A549 (cell line): ENCODE measurements at regions of chr2 and their contacts with region 1.

Region 1: GRCh38 chr2:219160186-219161017 is at the start of gene NHEJ1:
- DNase-seq: peak; percentile 94 to 95
- ATAC-seq: peak; percentile 94 to 96
- H3K4me3 ChIP-seq: peak within 1 kb of the TSS; percentile 54
- H3K27ac ChIP-seq: peak within 1 kb of the TSS; percentile 91 to 95
- H3K4me1 ChIP-seq: peaks cover 9% of the 10 kb centered on the region
- CTCF ChIP-seq: peak; percentile 95
- EP300 ChIP-seq: no peak
- POLR2A ChIP-seq: peak; percentile 80
- RAD21 ChIP-seq: peak; percentile 85 to 91
- polyA plus RNA-seq, gene NHEJ1: 31.8 and 34.7 TPM in 2 replicates

Region 2: DNA sequence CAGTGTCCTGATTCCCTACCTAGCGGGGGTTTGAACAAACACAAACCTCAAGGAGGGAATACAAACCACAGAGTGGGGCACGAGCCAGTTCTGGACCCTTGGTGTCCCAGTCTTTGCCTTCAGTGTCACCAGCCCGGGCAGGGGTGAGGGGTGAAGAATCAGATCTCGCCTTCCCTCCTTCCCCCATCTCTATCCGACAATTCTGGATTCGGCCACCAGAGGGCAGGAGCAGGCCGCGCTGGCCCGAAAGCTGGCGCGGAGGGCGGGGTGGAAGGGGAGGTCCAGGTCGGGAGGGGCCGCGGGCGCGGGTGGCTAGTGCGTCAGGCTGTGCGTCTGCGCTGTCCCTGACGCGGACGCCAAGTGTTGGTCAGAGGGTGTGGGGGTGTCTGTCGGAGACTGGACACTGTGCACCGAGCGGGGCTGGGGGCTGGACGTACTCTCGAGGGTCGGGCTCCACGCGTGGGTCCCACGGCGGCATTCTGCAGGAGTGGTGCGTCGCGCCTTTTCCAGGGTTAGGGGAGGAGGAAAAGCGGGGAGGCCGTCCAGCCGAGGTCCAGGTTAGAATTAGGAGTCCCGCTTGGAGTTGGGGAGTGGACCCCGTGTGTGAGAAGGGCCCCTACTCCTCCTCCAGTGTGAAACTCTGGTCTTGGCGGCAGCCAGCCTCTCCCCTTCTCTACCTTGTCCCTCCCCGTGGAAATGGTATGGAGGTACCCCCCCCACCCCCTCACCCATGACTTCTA is 164.3 kb before region 1 on chr2:
- CTCF ChIA-PET with region 1: interaction called, 17 read pairs
- POLR2A ChIA-PET with region 1: no interaction called
- DNase-seq: peak; percentile 87
- ATAC-seq: peak; percentile 78 to 93
- H3K4me3 ChIP-seq: peak overlapping the region; percentile 49
- H3K27ac ChIP-seq: peak overlapping the region; percentile 79 to 84
- H3K4me1 ChIP-seq: peaks cover 10% of the 10 kb centered on the region
- CTCF ChIP-seq: peak; percentile 87
- EP300 ChIP-seq: no peak
- POLR2A ChIP-seq: peak; percentile 84
- RAD21 ChIP-seq: peak; percentile 74 to 80

Region 3: DNA sequence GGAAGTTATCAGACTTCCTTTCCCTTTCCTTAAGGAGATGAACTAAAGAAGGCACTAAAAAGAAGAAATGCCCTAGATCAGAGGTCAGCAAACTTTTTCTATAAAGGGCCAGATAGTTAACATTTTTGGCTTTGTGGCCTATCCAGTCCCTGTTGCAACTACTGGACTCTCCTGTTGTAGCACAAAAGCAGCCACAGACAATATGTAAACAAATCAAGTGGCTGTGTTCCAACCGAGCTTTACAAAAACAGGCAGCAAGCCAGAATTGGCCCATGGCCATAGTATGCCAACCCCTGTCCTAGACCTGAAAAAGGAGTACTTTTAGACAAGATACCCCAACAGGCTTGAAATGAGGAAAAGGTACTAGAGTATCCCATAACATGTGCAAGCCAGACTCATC is 10.7 kb before region 1 on chr2:
- CTCF ChIA-PET with region 1: interaction called, 25 read pairs
- POLR2A ChIA-PET with region 1: no interaction called
- DNase-seq: no peak
- ATAC-seq: no peak
- H3K4me3 ChIP-seq: no peak overlapping the region
- H3K27ac ChIP-seq: no peak overlapping the region
- H3K4me1 ChIP-seq: peaks cover 9% of the 10 kb centered on the region; the same call in 2 of the 3 replicates
- CTCF ChIP-seq: no peak
- EP300 ChIP-seq: no peak
- POLR2A ChIP-seq: no peak
- RAD21 ChIP-seq: no peak

Region 4: DNA sequence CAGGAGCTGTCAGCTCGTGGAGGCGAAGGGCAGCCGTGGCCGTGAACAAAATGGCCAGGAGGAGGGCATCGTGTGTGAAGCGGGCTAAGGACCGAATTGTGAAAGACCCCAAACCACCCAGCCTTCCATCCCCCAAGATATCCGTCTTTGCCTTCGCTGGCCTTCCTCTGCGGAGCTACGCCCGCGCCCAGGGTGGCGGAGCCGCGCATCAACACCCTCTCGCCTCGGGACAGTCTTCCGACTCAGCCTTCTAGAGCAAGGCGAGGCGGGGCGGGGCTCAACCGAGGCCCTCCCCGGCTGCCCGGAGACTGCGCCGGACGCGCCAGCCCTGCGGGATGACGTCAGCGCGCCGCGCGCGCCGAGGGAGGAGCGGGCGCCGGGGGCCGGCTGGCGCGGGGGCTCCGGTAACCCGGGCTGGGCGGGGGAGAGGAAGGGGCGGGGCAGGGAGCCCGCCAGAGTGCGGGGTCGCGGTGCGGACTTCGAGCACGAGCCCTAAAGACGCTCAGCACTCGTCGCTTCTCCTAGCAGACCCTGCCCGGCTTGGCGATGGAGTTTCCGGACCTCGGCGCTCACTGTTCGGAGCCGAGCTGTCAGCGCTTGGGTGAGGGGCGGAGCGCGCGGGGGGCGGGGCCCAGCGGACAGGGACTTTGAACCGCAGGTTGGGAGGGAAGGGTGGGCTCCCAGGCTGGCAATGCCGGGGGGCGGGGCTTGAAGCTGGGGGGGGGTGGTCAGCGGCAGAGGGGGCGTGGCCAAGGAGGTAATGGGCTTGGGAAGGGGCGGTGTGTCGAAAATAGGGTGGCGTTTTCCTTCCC is 46.2 kb after region 1 on chr2 and contains the start of gene ZFAND2B:
- CTCF ChIA-PET with region 1: interaction called, 20 read pairs
- POLR2A ChIA-PET with region 1: no interaction called
- DNase-seq: peak; percentile 89 to 91
- ATAC-seq: peak; percentile 85 to 93
- H3K4me3 ChIP-seq: peak within 1 kb of the TSS; percentile 53
- H3K27ac ChIP-seq: peak within 1 kb of the TSS; percentile 95 to 98
- H3K4me1 ChIP-seq: peaks cover 16% of the 10 kb centered on the region
- CTCF ChIP-seq: no peak
- EP300 ChIP-seq: no peak
- POLR2A ChIP-seq: peak; percentile 96
- RAD21 ChIP-seq: no peak
- polyA plus RNA-seq, gene ZFAND2B: 29.1 and 30.3 TPM in 2 replicates

Region 5: DNA sequence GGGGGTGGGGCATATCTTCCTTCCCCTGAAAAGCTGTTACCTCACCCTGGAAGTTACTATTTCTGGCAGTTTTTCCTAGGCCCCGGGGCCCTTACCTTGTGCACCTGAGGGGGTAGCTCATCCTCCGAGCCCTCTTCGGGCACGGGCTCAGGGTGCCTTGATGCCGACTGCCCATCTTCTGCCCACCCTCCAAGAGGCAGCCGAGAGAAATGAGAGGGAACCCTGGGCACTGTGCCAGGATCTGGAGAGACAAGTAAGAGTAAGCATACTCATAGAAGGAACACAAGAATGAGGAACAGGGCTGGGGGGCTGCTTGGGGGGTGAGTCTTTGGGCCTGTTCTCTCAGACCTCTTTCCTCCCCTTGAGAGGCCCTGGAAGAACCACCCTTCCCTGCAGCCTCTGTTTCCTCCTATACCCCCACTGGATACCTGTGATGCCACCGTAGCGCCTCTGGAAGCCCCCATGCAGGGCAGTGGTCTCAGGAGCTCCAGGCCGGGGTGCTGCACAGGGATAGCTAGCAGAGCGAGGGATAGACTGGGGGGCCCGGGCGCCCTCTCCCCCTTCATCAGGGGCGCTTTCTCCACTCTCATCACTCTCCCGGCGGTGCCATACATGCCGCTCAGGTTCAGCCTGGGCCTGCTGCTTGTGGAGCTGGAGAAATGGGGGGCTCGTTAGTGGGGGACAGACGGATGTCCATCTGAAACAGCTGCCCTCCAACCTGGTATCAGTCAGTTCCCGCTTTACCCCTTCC is 60.4 kb after region 1 on chr2:
- CTCF ChIA-PET with region 1: no interaction called
- POLR2A ChIA-PET with region 1: no interaction called
- DNase-seq: no peak
- ATAC-seq: no peak
- H3K4me3 ChIP-seq: no peak overlapping the region
- H3K27ac ChIP-seq: no peak overlapping the region
- H3K4me1 ChIP-seq: peaks cover 24% of the 10 kb centered on the region
- CTCF ChIP-seq: no peak
- EP300 ChIP-seq: no peak
- POLR2A ChIP-seq: no peak
- RAD21 ChIP-seq: no peak

Region 6: DNA sequence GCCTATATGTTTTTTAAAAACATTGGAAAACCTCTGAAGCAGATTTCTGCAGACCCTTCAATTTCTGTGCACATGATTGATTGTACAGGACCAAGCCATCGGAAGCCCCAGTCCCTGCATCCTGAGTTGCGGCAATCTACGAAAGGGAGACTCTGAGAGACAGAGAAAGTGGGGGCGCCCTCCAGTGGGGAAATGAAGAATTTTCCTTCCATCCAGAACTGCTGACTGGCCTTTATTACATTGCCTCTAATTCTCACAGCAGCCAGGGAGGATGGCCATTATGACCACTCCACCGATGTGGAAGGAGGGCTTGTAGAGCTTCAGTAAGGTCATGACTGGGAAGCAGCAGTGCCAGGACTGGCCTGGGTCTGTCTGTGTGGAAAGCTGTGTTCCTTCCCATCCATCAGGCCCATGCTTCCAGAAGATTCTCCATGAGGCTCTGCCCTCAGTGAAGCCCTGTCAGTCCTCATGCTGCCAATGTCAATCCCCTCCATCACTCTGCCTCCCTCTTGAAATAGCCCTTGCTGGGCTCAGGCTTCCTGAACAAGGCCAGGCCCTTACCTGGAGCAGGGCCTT is 192.1 kb after region 1 on chr2:
- CTCF ChIA-PET with region 1: interaction called, 11 read pairs
- POLR2A ChIA-PET with region 1: no interaction called
- DNase-seq: peak; percentile 62 to 68
- ATAC-seq: peak; percentile 79 to 92
- H3K4me3 ChIP-seq: no peak overlapping the region
- H3K27ac ChIP-seq: no peak overlapping the region
- H3K4me1 ChIP-seq: peaks cover 1% of the 10 kb centered on the region; the same call in 2 of the 3 replicates
- CTCF ChIP-seq: peak; percentile 66
- EP300 ChIP-seq: no peak
- POLR2A ChIP-seq: no peak
- RAD21 ChIP-seq: peak; percentile 58 to 61